GM12878 (cell line): ENCODE measurements at regions of chr6 and their contacts with region 1.

Region 1: GRCh38 chr6:83615025-83615999 is 93.6 kb downstream of the SNAP91 start:
- DNase-seq: no peak
- ATAC-seq: peak; percentile 80
- H3K4me3 ChIP-seq: no peak overlapping the region
- H3K27ac ChIP-seq: no peak overlapping the region
- H3K4me1 ChIP-seq: no peaks in the 10 kb centered on the region
- H3K27me3 ChIP-seq: no peaks in the 10 kb centered on the region
- CTCF ChIP-seq: peak; percentile 41 to 54 (median 47); a peak in 5 of 6 replicates
- EP300 ChIP-seq: no peak
- POLR2A ChIP-seq: no peak
- RAD21 ChIP-seq: peak; percentile 56

Region 2: GRCh38 chr6:83231146-83231545 is 384.2 kb before region 1 on chr6:
- CTCF ChIA-PET with region 1: no interaction called
- POLR2A ChIA-PET with region 1: no interaction called
- RAD21 ChIA-PET with region 1: no interaction called
- SMC1A ChIA-PET with region 1: no interaction called
- in situ Hi-C with region 1: no loop called
- intact Hi-C with region 1: no loop called
- DNase-seq: no peak
- ATAC-seq: no peak
- H3K4me3 ChIP-seq: no peak overlapping the region
- H3K27ac ChIP-seq: no peak overlapping the region
- H3K4me1 ChIP-seq: no peaks in the 10 kb centered on the region
- H3K27me3 ChIP-seq: no peaks in the 10 kb centered on the region
- CTCF ChIP-seq: no peak
- EP300 ChIP-seq: no peak
- POLR2A ChIP-seq: no peak
- RAD21 ChIP-seq: no peak

Region 3: GRCh38 chr6:83514866-83515466 is 100.3 kb before region 1 on chr6:
- CTCF ChIA-PET with region 1: no interaction called
- POLR2A ChIA-PET with region 1: no interaction called
- RAD21 ChIA-PET with region 1: no interaction called
- SMC1A ChIA-PET with region 1: no interaction called
- in situ Hi-C with region 1: no loop called
- intact Hi-C with region 1: no loop called
- DNase-seq: peak; percentile 30
- ATAC-seq: peak; percentile 74
- H3K4me3 ChIP-seq: no peak overlapping the region
- H3K27ac ChIP-seq: no peak overlapping the region
- H3K4me1 ChIP-seq: no peaks in the 10 kb centered on the region
- H3K27me3 ChIP-seq: no peaks in the 10 kb centered on the region; a peak in 1 of 4 replicates
- CTCF ChIP-seq: peak; percentile 72 to 82 (median 76)
- EP300 ChIP-seq: no peak
- POLR2A ChIP-seq: no peak
- RAD21 ChIP-seq: peak; percentile 96

Region 4: GRCh38 chr6:83633149-83633548 is 17.8 kb after region 1 on chr6:
- CTCF ChIA-PET with region 1: interaction called, 10 read pairs
- POLR2A ChIA-PET with region 1: no interaction called
- RAD21 ChIA-PET with region 1: interaction called, 3 read pairs
- SMC1A ChIA-PET with region 1: interaction called, 8 read pairs
- in situ Hi-C with region 1: no loop called
- intact Hi-C with region 1: no loop called
- DNase-seq: peak; percentile 15
- ATAC-seq: peak; percentile 52
- H3K4me3 ChIP-seq: no peak overlapping the region
- H3K27ac ChIP-seq: no peak overlapping the region
- H3K4me1 ChIP-seq: no peaks in the 10 kb centered on the region
- H3K27me3 ChIP-seq: no peaks in the 10 kb centered on the region
- CTCF ChIP-seq: no peak
- EP300 ChIP-seq: no peak
- POLR2A ChIP-seq: no peak
- RAD21 ChIP-seq: no peak

Region 5: GRCh38 chr6:83859410-83860358 is 244.4 kb after region 1 on chr6 and contains the start of gene CYB5R4:
- CTCF ChIA-PET with region 1: interaction called, 7 read pairs
- POLR2A ChIA-PET with region 1: interaction called, 3 read pairs
- RAD21 ChIA-PET with region 1: interaction called, 10 read pairs
- SMC1A ChIA-PET with region 1: interaction called, 3 read pairs
- in situ Hi-C with region 1: no loop called
- intact Hi-C with region 1: no loop called
- DNase-seq: peak; percentile 84
- ATAC-seq: peak; percentile 96
- H3K4me3 ChIP-seq: peak within 1 kb of the TSS; percentile 83
- H3K27ac ChIP-seq: peak within 1 kb of the TSS; percentile 75
- H3K4me1 ChIP-seq: peaks cover 5% of the 10 kb centered on the region; the same call in 1 of the 2 replicates
- H3K27me3 ChIP-seq: 0 out of 4 replicates have a peak, but pooled peaks cover 1 to 6% of the 10 kb centered on the region in 2 experiments
- CTCF ChIP-seq: peak; percentile 27 to 49 (median 39); a peak in 4 of 6 replicates
- EP300 ChIP-seq: 0 out of 4 replicates have a peak, but pooled peaks of 1 of the 2 experiments have one; percentile 14
- POLR2A ChIP-seq: peak; percentile 97
- RAD21 ChIP-seq: no peak
- polyA plus RNA-seq, gene CYB5R4: 13.4 to 16.9 TPM

Region 6: DNA sequence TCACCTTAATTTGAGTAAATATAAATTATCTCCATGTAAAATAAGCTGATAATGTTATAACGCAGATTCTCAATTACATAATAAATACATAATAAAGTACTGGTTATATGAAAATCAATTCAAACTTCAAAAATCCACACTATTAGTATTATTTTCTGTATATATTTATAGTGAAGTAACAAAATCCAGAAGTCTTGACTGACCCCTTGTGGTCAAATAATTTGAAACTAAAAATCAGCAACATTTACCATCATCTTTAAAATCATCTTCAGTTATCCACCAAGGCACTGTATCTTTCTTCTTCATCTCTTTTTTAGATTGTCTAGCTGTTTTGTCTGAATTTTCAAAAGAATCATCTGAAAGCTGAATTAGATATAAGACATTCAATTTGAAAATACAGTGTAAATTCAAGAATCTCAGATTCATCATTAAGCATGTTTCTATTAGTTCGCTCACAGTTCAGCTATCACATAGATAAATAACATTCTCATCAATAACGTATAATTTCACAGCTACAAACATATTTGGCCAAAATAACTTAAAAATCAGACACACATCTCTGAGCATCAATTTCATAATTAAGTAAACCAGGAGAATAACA is 605.6 kb after region 1 on chr6:
- CTCF ChIA-PET with region 1: interaction called, 30 read pairs
- POLR2A ChIA-PET with region 1: no interaction called
- RAD21 ChIA-PET with region 1: interaction called, 18 read pairs
- SMC1A ChIA-PET with region 1: interaction called, 13 read pairs
- in situ Hi-C with region 1: loop called (anchors 10 kb)
- intact Hi-C with region 1: loop called (anchors 2 kb)
- DNase-seq: no peak
- ATAC-seq: 0 out of 3 replicates have a peak, but pooled peaks have one; percentile 39
- H3K4me3 ChIP-seq: no peak overlapping the region
- H3K27ac ChIP-seq: no peak overlapping the region
- H3K4me1 ChIP-seq: no peaks in the 10 kb centered on the region
- H3K27me3 ChIP-seq: no peaks in the 10 kb centered on the region
- CTCF ChIP-seq: peak; percentile 30 to 52 (median 36); a peak in 3 of 6 replicates
- EP300 ChIP-seq: no peak
- POLR2A ChIP-seq: no peak
- RAD21 ChIP-seq: peak; percentile 64

Region 7: GRCh38 chr6:85323435-85324040 is 1708.2 kb after region 1 on chr6:
- CTCF ChIA-PET with region 1: interaction called, 6 read pairs
- POLR2A ChIA-PET with region 1: no interaction called
- RAD21 ChIA-PET with region 1: interaction called, 6 read pairs
- SMC1A ChIA-PET with region 1: interaction called, 7 read pairs
- in situ Hi-C with region 1: no loop called
- intact Hi-C with region 1: loop called (anchors 10 kb)
- DNase-seq: peak; percentile 25
- ATAC-seq: peak; percentile 93
- H3K4me3 ChIP-seq: no peak overlapping the region
- H3K27ac ChIP-seq: no peak overlapping the region
- H3K4me1 ChIP-seq: no peaks in the 10 kb centered on the region
- H3K27me3 ChIP-seq: no peaks in the 10 kb centered on the region; a peak in 1 of 4 replicates
- CTCF ChIP-seq: peak; percentile 80 to 88 (median 84)
- EP300 ChIP-seq: no peak
- POLR2A ChIP-seq: no peak
- RAD21 ChIP-seq: peak; percentile 92